ENCODE measurements at regions of chr12 and their contacts with region 1.

Region 1: GRCh38 chr12:24814379-24815113 is 134.4 kb downstream of the BCAT1 start:
- DNase-seq: no peak
- H3K4me3 Mint-ChIP-seq: peak overlapping the region; percentile 71
- H3K27ac Mint-ChIP-seq: peak overlapping the region; percentile 78
- H3K4me1 Mint-ChIP-seq: peaks cover 17% of the 10 kb centered on the region
- H3K27me3 Mint-ChIP-seq: peaks cover 2% of the 10 kb centered on the region

Region 2: DNA sequence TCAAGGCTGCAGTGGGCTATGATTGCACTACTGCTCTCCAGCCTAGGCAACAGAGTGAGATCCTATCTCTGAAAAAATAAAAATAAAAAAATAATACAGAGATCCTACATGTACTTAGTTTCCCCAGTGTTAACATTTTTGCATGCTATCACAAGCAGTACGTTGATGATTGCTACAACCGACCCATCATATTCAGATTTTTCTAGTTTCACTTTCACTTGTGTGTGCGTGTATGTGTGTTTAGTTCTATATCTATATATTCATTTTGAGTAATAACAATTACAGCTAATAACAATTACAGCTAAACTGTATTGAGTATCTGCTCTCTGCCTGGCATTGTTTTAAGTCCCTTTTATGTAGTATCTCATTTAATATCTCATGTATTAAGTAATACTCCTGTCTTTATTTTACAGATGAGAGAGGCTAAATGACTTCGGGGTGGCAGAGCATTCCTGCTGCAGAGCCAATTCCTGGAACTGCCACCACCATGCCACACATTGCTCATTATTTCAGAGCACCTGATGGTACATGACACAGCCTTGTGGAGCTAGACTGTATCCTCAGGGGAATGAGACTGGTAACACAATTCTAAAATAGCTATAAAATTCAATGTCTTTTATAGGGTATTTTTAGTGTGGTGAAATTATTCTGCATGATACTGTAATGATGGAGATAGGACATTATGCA is 18.7 kb before region 1 on chr12:
- intact Hi-C with region 1: loop called (anchors 2 kb)
- DNase-seq: no peak
- H3K4me3 Mint-ChIP-seq: peak overlapping the region; percentile 77
- H3K27ac Mint-ChIP-seq: peak overlapping the region; percentile 60
- H3K4me1 Mint-ChIP-seq: peaks cover 38% of the 10 kb centered on the region
- H3K27me3 Mint-ChIP-seq: peaks cover 4% of the 10 kb centered on the region